ENCODE measurements at regions of chr20 and their contacts with region 1.

Region 1: GRCh38 chr20:64255361-64256281 is at the start of gene PCMTD2:
- DNase-seq: peak; percentile 92
- H3K4me3 Mint-ChIP-seq: peak within 1 kb of the TSS; percentile 85
- H3K27ac Mint-ChIP-seq: peak within 1 kb of the TSS; percentile 82
- H3K4me1 Mint-ChIP-seq: peaks cover 49% of the 10 kb centered on the region
- H3K27me3 Mint-ChIP-seq: peaks cover 2% of the 10 kb centered on the region
- total RNA-seq, gene PCMTD2: 32.8 to 33.7 TPM

Region 2: DNA sequence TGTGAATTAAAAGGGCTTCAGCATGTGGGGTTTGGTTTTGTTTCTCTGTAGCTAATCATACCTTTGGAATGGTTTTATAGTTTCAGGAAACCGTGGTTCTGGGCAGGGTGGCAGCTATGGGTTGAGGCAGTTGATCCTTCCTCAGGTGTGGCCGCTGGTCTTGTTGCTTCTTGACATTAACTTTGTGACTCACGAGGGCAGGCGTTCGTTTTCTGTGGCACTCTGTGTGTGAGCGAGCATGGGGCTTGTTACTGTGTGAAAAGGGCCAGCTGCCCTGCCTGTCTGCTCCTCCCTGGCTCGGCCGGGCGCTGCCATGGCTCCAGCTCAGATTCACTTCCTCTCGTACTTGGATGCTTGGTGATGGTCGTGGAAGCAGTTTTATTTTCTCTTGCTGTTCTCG is 344.4 kb before region 1 on chr20:
- CTCF ChIA-PET with region 1: no interaction called
- POLR2A ChIA-PET with region 1: no interaction called
- intact Hi-C with region 1: no loop called
- DNase-seq: no peak
- H3K4me3 Mint-ChIP-seq: no peak overlapping the region
- H3K27ac Mint-ChIP-seq: no peak overlapping the region
- H3K4me1 Mint-ChIP-seq: peaks cover 31% of the 10 kb centered on the region
- H3K27me3 Mint-ChIP-seq: no peaks in the 10 kb centered on the region

Region 3: GRCh38 chr20:64232794-64233193 is 22.8 kb before region 1 on chr20:
- CTCF ChIA-PET with region 1: no interaction called
- POLR2A ChIA-PET with region 1: no interaction called
- intact Hi-C with region 1: no loop called
- DNase-seq: no peak
- H3K4me3 Mint-ChIP-seq: no peak overlapping the region
- H3K27ac Mint-ChIP-seq: no peak overlapping the region
- H3K4me1 Mint-ChIP-seq: peaks cover 13% of the 10 kb centered on the region
- H3K27me3 Mint-ChIP-seq: no peaks in the 10 kb centered on the region

Region 4: GRCh38 chr20:64244281-64244805 is 11.3 kb before region 1 on chr20:
- CTCF ChIA-PET with region 1: no interaction called
- POLR2A ChIA-PET with region 1: no interaction called
- intact Hi-C with region 1: no loop called
- DNase-seq: peak; percentile 3
- H3K4me3 Mint-ChIP-seq: no peak overlapping the region
- H3K27ac Mint-ChIP-seq: no peak overlapping the region
- H3K4me1 Mint-ChIP-seq: peaks cover 3% of the 10 kb centered on the region
- H3K27me3 Mint-ChIP-seq: peaks cover 16% of the 10 kb centered on the region

Region 5: GRCh38 chr20:64279826-64280459 is 24.3 kb after region 1 on chr20:
- CTCF ChIA-PET with region 1: interaction called, 61 read pairs
- POLR2A ChIA-PET with region 1: no interaction called
- intact Hi-C with region 1: no loop called
- DNase-seq: no peak
- H3K4me3 Mint-ChIP-seq: no peak overlapping the region
- H3K27ac Mint-ChIP-seq: no peak overlapping the region
- H3K4me1 Mint-ChIP-seq: peaks cover 7% of the 10 kb centered on the region
- H3K27me3 Mint-ChIP-seq: no peaks in the 10 kb centered on the region

Measured in activated CD4-positive, alpha-beta memory T cell treated with anti-CD3 and anti-CD28 coated beads for 36 hours (primary cell).